ENCODE measurements at regions of chr1 and their contacts with region 1.

Region 1: DNA sequence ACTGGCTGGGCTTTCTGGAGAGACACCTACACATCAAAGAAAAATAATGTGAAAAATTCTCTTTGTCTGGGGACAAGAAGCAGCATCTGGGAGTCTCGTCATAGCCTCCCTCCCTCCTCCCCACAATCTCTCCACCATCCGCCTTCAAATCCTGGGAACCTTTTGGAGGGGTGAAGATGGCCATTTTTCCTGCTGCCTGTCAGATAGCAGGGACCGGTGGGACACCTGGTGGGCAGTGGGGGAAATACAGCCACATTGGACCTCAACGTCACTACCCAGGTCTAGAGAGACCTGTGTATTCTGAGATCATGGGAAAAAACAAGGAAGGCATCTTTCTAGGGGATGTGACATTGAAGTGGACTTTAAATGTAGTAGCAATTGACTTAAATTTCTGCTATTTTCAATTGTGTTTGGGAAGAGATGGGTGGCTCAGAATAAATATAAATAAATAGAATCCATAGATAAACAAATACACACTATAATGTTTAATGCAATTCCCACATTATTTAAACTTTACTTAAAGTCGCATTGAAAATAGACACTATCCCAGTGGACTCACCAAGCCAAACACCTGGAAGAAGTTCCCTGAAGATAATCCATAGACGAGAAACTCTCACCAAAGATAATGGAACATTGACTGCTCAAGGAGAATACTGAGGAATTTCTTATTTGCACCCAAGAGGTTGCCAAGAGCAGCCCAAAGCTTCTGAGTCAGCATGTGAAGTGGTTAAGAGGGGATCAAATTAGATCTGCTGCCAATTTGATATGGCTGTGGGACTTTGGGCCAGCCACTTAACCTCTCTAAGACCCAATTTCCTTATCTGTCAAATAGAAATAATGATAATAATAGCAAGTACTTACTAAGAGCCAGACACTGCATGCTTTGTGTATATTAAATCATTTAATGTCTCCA is 147.6 kb upstream of the CAMK1G start:
- DNase-seq: peak; percentile 49 to 75 (median 63)
- H3K4me3 ChIP-seq: no peak overlapping the region
- H3K27ac ChIP-seq: no peak overlapping the region
- H3K4me1 ChIP-seq: peaks cover 0 to 8% (median 0%) of the 10 kb centered on the region in 4 experiments
- H3K27me3 ChIP-seq: no peaks in the 10 kb centered on the region

Region 2: GRCh38 chr1:209398313-209398991 is 37.5 kb before region 1 on chr1:
- CTCF ChIA-PET with region 1: interaction called, 18 read pairs
- POLR2A ChIA-PET with region 1: no interaction called
- DNase-seq: peak; percentile 85 to 99 (median 97)
- H3K4me3 ChIP-seq: peak overlapping the region in 1 of 7 experiments; percentile 29
- H3K27ac ChIP-seq: peak overlapping the region; percentile 90 to 93
- H3K4me1 ChIP-seq: peaks cover 6 to 52% (median 33%) of the 10 kb centered on the region in 4 experiments
- H3K27me3 ChIP-seq: no peaks in the 10 kb centered on the region

Region 3: DNA sequence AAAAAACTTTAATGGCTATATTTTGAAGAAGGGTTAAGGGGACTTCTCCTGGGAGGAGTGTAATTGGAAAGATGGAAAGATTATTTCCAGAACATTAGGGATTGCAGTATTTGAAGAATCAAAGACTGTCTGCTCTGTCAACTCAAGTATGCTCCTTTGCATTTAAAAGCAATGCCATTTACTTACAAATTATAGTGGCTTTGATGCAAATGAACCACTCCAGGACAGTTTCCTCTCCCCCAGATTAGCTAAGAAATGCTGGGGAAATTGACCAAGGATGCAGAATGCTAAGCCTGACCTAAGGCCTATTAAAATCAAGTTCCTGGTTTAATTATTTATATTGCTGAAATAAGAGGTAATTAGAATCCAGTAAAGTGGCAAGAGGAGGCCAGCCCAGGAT is 37.1 kb after region 1 on chr1:
- CTCF ChIA-PET with region 1: no interaction called
- POLR2A ChIA-PET with region 1: no interaction called
- DNase-seq: no peak
- H3K4me3 ChIP-seq: no peak overlapping the region
- H3K27ac ChIP-seq: no peak overlapping the region
- H3K4me1 ChIP-seq: no peaks in the 10 kb centered on the region
- H3K27me3 ChIP-seq: peaks cover 0 to 3% (median 0%) of the 10 kb centered on the region in 5 experiments